Sigmoid colon (tissue), 7 donors: ENCODE measurements at regions of chr6 and their contacts with region 1.

Region 1: GRCh38 chr6:53171605-53172446 is 23.2 kb upstream of the GCM1 start:
- DNase-seq: peak; percentile 94
- H3K4me3 ChIP-seq: no peak overlapping the region
- H3K27ac ChIP-seq: no peak overlapping the region
- H3K4me1 ChIP-seq: peaks cover 0 to 16% (median 2%) of the 10 kb centered on the region in 4 donors
- H3K27me3 ChIP-seq: no peaks in the 10 kb centered on the region
- CTCF ChIP-seq: peak; percentile 100
- EP300 ChIP-seq: no peak
- POLR2A ChIP-seq: no peak

Region 2: GRCh38 chr6:53281518-53282215 is 109.8 kb after region 1 on chr6:
- intact Hi-C with region 1: no loop called
- DNase-seq: no peak
- H3K4me3 ChIP-seq: no peak overlapping the region
- H3K27ac ChIP-seq: peak overlapping the region in 1 of 4 donors; percentile 27
- H3K4me1 ChIP-seq: peaks cover 0 to 29% (median 14%) of the 10 kb centered on the region in 4 donors
- H3K27me3 ChIP-seq: no peaks in the 10 kb centered on the region
- CTCF ChIP-seq: no peak
- EP300 ChIP-seq: no peak
- POLR2A ChIP-seq: no peak

Region 3: GRCh38 chr6:53294095-53294494 is 122.3 kb after region 1 on chr6:
- intact Hi-C with region 1: loop called (anchors 10 kb)
- DNase-seq: no peak
- H3K4me3 ChIP-seq: no peak overlapping the region
- H3K27ac ChIP-seq: no peak overlapping the region
- H3K4me1 ChIP-seq: peaks cover 0 to 12% (median 3%) of the 10 kb centered on the region in 4 donors
- H3K27me3 ChIP-seq: no peaks in the 10 kb centered on the region
- CTCF ChIP-seq: peak in 2 of 4 experiments; percentile 30
- EP300 ChIP-seq: no peak
- POLR2A ChIP-seq: no peak

Region 4: GRCh38 chr6:53437557-53438202 is 265.9 kb after region 1 on chr6:
- intact Hi-C with region 1: loop called (anchors 1 kb)
- DNase-seq: no peak
- H3K4me3 ChIP-seq: no peak overlapping the region
- H3K27ac ChIP-seq: no peak overlapping the region
- H3K4me1 ChIP-seq: peaks cover 0 to 22% (median 19%) of the 10 kb centered on the region in 4 donors
- H3K27me3 ChIP-seq: no peaks in the 10 kb centered on the region
- CTCF ChIP-seq: peak in 2 of 4 experiments; percentile 17 to 24
- EP300 ChIP-seq: no peak
- POLR2A ChIP-seq: no peak

Region 5: DNA sequence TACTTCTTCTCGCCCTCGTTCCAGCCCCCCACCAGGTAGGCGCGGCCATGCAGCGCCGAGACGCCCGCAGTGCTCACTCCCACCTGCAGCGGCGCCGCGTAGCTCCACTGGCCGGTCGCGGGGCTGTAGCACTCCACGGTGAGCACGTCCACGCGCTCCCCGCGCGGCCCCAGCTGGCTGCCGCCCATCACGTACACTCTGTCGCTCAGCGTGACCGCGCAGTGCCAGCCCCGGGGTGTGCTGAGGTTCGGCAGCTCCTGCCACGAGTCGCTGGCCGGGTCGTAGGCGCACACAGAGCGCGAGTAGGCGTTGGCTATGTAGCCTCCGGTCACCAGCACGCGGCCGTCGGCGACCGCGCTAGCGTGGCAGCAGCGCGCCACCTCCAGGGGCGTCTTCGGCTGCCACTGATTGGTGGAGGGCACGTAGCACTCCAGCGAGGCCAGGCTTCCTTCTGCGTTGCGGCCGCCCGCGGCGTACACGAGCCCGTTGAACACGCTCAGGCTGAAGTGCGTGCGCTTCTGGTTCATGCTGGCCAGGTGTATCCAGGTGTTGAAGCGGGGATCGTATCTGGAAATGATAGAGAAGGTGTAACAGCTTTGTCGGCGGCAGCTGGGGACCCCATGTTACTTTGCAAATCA is 480.1 kb after region 1 on chr6:
- intact Hi-C with region 1: loop called (anchors 5 kb)
- DNase-seq: peak; percentile 82
- H3K4me3 ChIP-seq: peak overlapping the region; percentile 42 to 65 (median 57)
- H3K27ac ChIP-seq: peak overlapping the region in 3 of 4 donors; percentile 15 to 56 (median 41)
- H3K4me1 ChIP-seq: peaks cover 0 to 20% (median 8%) of the 10 kb centered on the region in 4 donors
- H3K27me3 ChIP-seq: no peaks in the 10 kb centered on the region
- CTCF ChIP-seq: peak in 2 of 4 experiments; percentile 14 to 22
- EP300 ChIP-seq: no peak
- POLR2A ChIP-seq: no peak